OCI-LY7 (cell line): ENCODE measurements at regions of chr10 and their contacts with region 1.

Region 1: DNA sequence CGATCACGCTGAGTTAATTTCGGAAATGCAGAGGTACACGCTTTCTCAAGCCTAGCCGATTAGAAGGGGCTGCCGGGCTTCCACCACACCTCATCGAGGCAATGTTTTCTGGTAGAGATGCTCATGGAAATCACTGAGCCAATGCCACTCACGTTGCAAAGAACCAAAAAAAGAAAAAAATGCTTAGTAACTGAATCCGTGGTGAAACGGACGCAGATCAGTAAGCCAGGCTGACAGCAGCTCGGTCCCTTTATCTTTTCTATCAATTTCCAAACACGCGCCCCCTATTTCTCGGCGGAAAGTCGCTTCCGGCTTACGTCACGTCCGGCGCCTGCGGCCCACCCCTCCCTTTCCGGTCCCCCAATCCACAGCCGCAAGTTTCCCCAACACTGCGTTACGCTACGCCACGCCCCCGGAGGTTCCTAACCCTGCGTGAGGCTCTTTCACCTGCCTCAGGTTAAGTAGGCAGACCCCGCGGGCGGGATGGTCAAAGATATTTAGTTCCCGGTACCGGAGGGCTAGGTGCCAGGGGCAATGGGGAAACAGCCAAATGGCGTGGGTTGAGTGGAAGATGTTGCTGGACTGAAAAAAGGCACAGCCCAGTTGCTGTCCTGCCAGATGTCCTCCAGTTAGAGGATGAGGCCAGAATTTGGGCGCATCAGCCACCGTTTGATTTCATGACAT is at the start of gene NSUN6:
- DNase-seq: peak; percentile 91
- H3K4me3 ChIP-seq: peak within 1 kb of the TSS; percentile 86
- H3K27ac ChIP-seq: peak within 1 kb of the TSS; percentile 80
- H3K4me1 ChIP-seq: peaks cover 17% of the 10 kb centered on the region
- CTCF ChIP-seq: no peak
- total RNA-seq, gene NSUN6: 20.0 and 23.2 TPM in 2 replicates

Region 2: DNA sequence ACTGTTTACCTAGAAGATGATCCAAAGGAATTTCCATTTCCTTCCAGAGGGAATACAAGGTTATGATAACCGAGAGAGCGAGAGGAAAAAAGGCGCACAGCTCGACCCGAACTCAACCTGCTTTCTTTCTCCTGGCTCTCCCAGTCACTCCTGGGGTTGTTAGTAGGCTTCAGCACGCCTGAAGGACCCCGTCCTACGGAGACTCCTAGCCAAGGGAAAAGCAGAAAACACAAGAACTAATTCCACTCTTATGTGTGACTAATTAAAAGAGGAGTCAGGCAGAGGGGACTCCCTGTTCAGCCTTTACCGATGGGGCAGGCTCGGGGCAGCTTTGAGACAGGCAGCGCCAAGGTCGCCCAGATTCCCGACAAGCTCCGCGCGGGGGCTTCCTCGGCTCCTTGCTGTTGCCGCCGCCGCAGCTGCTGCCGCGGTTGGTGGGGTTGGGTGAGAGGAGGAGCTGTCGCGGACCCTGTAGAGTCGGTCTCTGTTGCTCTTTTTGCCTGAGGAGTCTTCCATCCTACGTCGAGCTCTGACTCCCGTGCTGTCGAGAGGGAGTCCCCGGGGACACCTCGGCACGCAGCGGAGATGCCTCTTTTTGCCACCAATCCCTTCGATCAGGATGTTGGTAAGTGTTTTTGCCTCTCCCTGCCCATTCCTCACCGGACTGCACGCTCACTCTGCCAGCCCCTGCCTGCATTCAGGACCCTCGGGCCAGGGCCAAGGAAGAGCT is 1007.5 kb before region 1 on chr10 and contains the start of gene STAM:
- CTCF ChIA-PET with region 1: no interaction called
- POLR2A ChIA-PET with region 1: no interaction called
- intact Hi-C with region 1: loop called (anchors 5 kb)
- DNase-seq: peak; percentile 94
- H3K4me3 ChIP-seq: peak within 1 kb of the TSS; percentile 86
- H3K27ac ChIP-seq: peak within 1 kb of the TSS; percentile 78
- H3K4me1 ChIP-seq: peaks cover 29% of the 10 kb centered on the region
- CTCF ChIP-seq: no peak; the same call in 1 of the 2 replicates
- total RNA-seq, gene STAM: 8.6 and 12.9 TPM in 2 replicates

Region 3: DNA sequence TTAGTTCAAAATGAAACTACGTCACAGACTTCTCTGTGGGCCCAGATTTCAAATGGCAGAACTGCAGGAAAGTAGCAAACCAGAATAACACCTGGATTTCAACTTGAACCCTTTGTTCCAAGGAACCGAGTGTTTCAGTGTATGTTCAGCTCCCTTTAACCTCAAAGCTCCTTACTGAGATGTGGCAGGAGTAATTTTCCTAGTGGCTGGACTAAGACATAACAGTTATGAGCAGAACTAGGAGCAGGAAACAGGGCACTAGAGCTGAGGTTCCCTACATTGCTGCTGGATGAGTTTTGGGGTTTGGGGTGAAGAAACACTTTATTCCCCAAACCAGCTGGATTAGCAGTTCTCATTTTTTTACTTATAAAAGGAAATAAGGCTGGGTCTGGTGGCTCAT is 50.1 kb before region 1 on chr10:
- CTCF ChIA-PET with region 1: no interaction called
- POLR2A ChIA-PET with region 1: no interaction called
- intact Hi-C with region 1: no loop called
- DNase-seq: no peak
- H3K4me3 ChIP-seq: no peak overlapping the region
- H3K27ac ChIP-seq: no peak overlapping the region
- H3K4me1 ChIP-seq: no peaks in the 10 kb centered on the region
- CTCF ChIP-seq: no peak

Region 4: DNA sequence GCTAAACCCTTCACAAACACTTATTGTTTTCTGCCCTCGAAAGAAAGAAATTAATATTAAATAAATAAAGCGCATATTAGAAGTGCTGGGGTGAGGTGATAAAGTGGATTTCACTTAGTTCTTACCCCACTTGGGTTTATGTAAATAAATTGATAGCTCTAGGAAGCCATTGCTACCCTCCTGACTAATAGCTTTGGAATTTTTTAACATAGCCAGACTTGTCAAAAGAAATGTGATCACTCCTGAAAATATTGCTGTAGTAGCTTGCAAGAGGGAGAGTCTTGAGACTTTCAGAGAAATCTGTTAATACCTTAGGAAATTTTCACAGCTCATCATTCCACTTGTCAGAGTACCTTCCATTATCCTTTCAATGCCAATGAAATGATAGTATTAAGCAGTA is 15.3 kb after region 1 on chr10:
- CTCF ChIA-PET with region 1: no interaction called
- POLR2A ChIA-PET with region 1: interaction called, 19 read pairs
- intact Hi-C with region 1: no loop called
- DNase-seq: no peak
- H3K4me3 ChIP-seq: no peak overlapping the region
- H3K27ac ChIP-seq: no peak overlapping the region
- H3K4me1 ChIP-seq: peaks cover 8% of the 10 kb centered on the region
- CTCF ChIP-seq: no peak

Region 5: DNA sequence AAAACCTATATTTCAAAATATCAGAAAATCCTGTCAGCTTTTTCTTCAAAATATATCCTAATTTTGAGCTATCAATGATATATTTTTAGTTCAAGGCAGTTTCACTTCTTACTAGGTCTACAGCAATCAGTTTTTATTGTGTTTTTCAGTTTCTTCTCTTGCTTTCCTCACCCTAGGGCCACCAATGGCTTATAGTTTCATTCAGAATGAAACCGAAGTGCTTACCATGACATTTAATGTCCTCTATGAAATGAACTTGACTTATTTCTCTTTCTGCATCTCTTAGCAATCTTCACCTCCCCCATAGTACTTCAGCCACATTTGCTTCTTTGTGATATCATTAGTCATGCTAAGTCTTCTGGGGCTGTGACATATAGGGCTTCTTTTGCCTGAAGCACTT is 108.1 kb after region 1 on chr10:
- CTCF ChIA-PET with region 1: no interaction called
- POLR2A ChIA-PET with region 1: no interaction called
- intact Hi-C with region 1: no loop called
- DNase-seq: no peak
- H3K4me3 ChIP-seq: no peak overlapping the region
- H3K27ac ChIP-seq: no peak overlapping the region
- H3K4me1 ChIP-seq: no peaks in the 10 kb centered on the region
- CTCF ChIP-seq: no peak